AG04449 (cell line): ENCODE measurements at regions of chr13 and their contacts with region 1.

Region 1: GRCh38 chr13:35712907-35713761 is 236.6 kb upstream of the MAB21L1 start:
- DNase-seq: peak; percentile 84
- H3K4me3 ChIP-seq: no peak overlapping the region
- CTCF ChIP-seq: no peak

Region 2: DNA sequence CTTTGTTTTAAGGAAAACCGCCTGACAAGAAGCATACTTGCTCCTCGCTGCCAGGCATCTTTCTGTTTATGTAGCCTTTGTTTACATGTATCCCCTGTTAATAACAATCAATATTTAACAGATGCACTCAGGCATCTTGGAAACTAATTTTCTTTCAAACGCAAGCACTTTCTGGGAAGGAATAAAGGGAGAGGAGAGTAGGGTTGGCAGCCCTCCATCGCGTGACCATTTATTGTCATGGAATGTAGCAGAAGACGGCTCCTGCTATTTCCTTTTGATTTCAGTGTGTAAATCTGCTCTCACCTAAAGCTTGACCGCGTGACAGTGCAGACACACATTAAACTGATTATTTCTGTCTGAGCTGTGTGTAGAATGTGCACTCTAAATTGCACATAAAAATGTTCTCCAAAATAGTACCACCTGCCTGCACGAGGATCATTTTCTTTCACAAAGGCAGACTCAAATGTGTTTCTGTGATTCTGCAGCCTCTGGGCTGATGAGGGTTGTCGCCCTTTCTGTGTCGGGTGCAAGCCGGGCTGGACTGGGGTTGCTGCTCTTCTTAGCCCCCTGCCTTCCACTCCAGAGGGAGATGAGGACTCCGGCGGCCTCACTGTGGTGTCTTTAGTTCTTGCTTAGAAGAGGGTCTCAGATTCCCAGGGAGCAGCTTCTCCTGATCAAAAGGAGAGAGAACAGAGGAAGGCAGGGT is 13.2 kb before region 1 on chr13:
- CTCF ChIA-PET with region 1: interaction called, 10 read pairs
- POLR2A ChIA-PET with region 1: interaction called, 12 read pairs
- DNase-seq: no peak
- H3K4me3 ChIP-seq: peak overlapping the region; percentile 37
- CTCF ChIP-seq: no peak